MCF 10A (cell line): ENCODE measurements at regions of chr5 and their contacts with region 1.

Region 1: DNA sequence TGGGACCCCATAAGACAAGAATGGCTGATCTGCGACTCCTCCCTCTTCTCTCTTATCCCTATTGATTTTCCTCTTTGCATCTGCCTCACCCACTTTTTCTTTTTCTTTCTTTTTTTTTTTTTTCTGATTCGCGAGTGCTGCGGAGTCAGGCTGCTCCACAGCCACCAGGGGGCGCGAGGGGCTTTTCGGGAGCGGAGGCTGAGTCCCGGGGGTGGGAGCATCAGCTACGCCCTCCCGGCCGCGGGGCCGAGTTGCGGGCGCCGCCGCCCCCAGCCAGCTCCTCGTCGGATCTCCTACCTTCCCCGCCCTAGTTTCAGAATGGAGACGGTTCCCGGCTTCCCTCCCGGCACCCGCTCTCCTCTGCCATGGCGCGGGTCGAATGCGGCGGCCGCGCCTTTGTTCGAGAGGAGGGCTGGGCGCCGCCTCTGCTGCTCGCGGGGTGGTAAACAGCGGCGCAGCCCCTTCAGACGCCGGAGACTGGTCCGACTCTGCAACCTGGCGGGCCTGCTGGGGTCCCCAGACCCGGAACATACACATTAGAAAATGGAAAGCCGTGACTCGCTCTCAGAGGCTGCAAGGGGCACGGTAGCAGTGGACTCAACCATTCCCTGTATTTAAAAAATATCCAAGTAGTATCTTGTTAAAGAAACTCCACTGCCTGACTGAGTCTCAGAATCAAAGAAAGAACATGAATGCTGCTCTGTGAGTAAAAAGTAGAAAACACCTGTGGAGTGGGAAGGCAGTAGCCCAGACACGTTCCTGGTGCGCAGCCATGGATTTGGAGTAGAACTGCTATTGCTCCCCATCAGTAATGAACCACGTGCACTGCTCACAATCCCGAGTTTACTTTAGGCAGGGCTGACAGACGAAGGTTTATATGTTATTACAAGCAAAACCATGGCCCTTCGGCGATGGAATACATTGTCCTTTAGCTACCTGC is 55.7 kb downstream of the DPYSL3 start:
- DNase-seq: peak; percentile 86
- H3K4me3 Mint-ChIP-seq: peak overlapping the region; percentile 84
- H3K27ac Mint-ChIP-seq: peak overlapping the region; percentile 64
- H3K4me1 Mint-ChIP-seq: peaks cover 10% of the 10 kb centered on the region
- H3K27me3 Mint-ChIP-seq: peaks cover 33% of the 10 kb centered on the region
- CTCF ChIP-seq: peak; percentile 97

Region 2: GRCh38 chr5:147223948-147224791 is 230.0 kb before region 1 on chr5:
- CTCF ChIA-PET with region 1: no interaction called
- POLR2A ChIA-PET with region 1: no interaction called
- intact Hi-C with region 1: loop called (anchors 5 kb)
- DNase-seq: peak; percentile 78
- H3K4me3 Mint-ChIP-seq: no peak overlapping the region
- H3K27ac Mint-ChIP-seq: no peak overlapping the region
- H3K4me1 Mint-ChIP-seq: peaks cover 7% of the 10 kb centered on the region
- H3K27me3 Mint-ChIP-seq: peaks cover 44% of the 10 kb centered on the region
- CTCF ChIP-seq: peak; percentile 87

Region 3: DNA sequence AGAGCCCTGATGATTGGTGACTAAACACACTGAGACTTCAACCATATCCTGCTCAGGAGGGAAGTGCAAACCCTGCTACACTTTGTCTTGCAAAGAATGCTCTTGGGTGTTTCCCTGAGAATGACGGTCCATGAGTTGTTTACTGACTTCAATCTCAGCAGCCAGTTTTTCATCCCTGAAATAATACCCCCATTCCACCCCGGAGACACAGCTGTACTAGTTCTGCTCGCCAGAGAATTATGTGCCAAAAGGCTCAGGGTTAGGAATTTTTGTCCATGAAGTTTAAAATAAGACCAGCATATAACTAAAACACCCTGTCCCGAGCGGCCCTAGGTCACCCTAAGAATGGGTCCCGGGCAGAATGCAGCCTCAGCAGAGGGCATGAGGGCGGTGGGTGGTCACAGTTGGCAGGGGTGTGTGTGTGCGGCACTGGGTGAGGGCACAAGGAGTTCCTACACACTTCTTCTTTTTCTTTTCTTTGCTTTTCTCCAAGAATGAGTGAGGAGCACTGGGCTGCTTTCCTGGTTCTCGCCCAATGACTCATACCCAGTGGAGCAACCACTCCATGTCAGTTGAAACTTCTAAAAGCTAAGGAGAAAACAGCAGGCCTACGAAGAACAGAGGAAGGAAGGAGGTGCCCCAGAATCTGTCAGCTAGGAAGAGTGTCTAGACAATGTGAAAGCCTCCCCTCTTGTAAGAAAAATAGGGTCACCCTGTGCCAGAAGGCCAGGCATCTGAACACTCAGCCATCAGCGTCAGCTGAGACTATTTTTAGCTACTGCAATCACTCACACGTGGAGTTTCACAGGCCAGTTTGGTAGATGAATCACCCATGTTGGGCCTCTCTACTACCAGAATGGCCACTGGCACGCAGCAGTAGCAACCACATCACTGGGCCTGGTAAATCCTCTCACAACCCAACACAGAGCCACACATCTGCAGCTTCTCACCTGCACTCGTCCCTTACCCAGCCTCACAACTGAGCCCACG is 50.2 kb before region 1 on chr5:
- CTCF ChIA-PET with region 1: interaction called, 6 read pairs
- POLR2A ChIA-PET with region 1: no interaction called
- intact Hi-C with region 1: loop called (anchors 1 kb)
- DNase-seq: peak; percentile 95
- H3K4me3 Mint-ChIP-seq: no peak overlapping the region
- H3K27ac Mint-ChIP-seq: peak overlapping the region; percentile 91
- H3K4me1 Mint-ChIP-seq: peaks cover 20% of the 10 kb centered on the region
- H3K27me3 Mint-ChIP-seq: no peaks in the 10 kb centered on the region
- CTCF ChIP-seq: no peak

Region 4: GRCh38 chr5:147464211-147464610 is 10.1 kb after region 1 on chr5:
- CTCF ChIA-PET with region 1: interaction called, 38 read pairs
- POLR2A ChIA-PET with region 1: interaction called, 3 read pairs
- intact Hi-C with region 1: no loop called
- DNase-seq: peak; percentile 68
- H3K4me3 Mint-ChIP-seq: no peak overlapping the region
- H3K27ac Mint-ChIP-seq: no peak overlapping the region
- H3K4me1 Mint-ChIP-seq: no peaks in the 10 kb centered on the region
- H3K27me3 Mint-ChIP-seq: no peaks in the 10 kb centered on the region
- CTCF ChIP-seq: peak; percentile 63

Region 5: DNA sequence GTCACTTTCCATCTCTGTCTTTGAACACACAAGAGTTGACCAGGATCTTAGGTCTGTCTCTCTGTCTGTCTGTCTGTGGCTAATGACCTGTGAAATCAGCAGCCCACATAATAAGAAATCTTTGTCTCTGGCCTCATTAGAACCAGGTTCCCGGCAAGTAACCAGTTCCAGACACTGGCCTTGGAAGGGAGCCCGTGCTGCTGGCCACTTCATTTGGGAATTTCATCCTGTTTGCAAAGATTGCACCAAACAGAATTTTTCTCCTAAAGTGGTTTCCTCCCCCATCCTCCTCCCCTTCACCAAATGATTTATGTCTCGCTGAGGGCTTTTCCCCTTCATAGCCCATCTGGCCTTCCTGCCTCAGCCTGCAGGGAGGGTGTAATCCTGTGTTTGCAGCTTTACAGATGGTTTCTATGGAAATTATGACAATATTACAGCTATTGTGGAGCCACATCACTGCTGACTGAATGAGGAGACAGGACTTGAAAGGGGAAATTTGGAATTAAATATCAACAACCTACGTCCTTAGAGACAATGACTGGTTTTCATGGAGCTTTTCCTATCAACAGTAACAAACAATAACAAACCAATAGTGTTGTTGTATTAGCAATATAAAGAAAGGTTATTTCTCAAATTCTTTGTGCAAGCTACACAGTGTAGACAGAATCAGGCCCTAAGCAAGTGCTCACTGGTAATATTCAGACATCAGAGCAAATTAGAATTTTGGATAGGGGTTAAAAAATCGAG is 30.0 kb after region 1 on chr5:
- CTCF ChIA-PET with region 1: interaction called, 15 read pairs
- POLR2A ChIA-PET with region 1: no interaction called
- intact Hi-C with region 1: no loop called
- DNase-seq: no peak
- H3K4me3 Mint-ChIP-seq: no peak overlapping the region
- H3K27ac Mint-ChIP-seq: peak overlapping the region; percentile 43
- H3K4me1 Mint-ChIP-seq: no peaks in the 10 kb centered on the region
- H3K27me3 Mint-ChIP-seq: no peaks in the 10 kb centered on the region
- CTCF ChIP-seq: no peak

Region 6: DNA sequence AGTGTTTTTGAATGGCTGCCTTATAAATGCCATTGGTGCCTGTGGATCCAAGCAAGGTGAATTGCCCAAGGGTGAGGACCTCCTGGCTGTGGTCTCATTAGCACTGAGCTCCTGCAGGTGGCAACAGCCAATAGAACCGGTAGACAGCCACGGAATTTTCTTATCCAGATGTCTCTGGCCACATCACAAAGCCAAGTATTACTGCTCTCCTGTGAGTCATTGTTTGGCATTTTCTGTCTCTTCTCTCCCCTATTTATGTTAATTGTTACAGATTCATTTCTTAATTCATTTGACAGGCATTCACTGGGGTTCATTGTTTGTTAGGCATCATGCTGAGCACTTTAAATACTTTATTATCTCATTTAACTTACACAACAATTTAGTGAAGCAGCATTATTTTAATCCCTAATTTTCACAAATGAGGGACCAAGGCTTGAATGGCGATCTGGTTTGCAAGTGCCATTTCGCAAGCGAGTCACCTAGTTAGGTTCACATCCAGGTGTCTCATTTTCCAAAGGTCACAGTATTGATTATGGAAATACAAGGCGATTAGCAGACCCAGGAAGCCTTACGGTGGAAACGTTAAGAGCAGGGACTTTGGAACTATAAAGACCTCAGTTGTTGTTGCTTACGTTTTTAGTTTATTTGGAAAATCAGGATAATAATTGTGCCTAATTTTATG is 113.9 kb after region 1 on chr5:
- CTCF ChIA-PET with region 1: interaction called, 210 read pairs
- POLR2A ChIA-PET with region 1: interaction called, 4 read pairs
- intact Hi-C with region 1: no loop called
- DNase-seq: peak; percentile 65
- H3K4me3 Mint-ChIP-seq: no peak overlapping the region
- H3K27ac Mint-ChIP-seq: no peak overlapping the region
- H3K4me1 Mint-ChIP-seq: peaks cover 23% of the 10 kb centered on the region
- H3K27me3 Mint-ChIP-seq: no peaks in the 10 kb centered on the region
- CTCF ChIP-seq: no peak